SK-N-SH (cell line): ENCODE measurements at regions of chr2 and their contacts with region 1.

Region 1: GRCh38 chr2:237072067-237072931 is 13.4 kb upstream of the COPS8 start:
- DNase-seq: peak; percentile 67
- H3K4me3 ChIP-seq: no peak overlapping the region; a peak in 1 of 4 replicates
- H3K27ac ChIP-seq: no peak overlapping the region
- H3K4me1 ChIP-seq: no peaks in the 10 kb centered on the region; a peak in 1 of 4 replicates
- H3K27me3 ChIP-seq: no peaks in the 10 kb centered on the region
- CTCF ChIP-seq: peak; percentile 91
- EP300 ChIP-seq: no peak
- RAD21 ChIP-seq: peak; percentile 84

Region 2: GRCh38 chr2:237085248-237086221 is 13.2 kb after region 1 on chr2 and contains the start of gene COPS8:
- CTCF ChIA-PET with region 1: interaction called, 20 read pairs
- POLR2A ChIA-PET with region 1: no interaction called
- DNase-seq: peak; percentile 95
- H3K4me3 ChIP-seq: peak within 1 kb of the TSS; percentile 77 to 98
- H3K27ac ChIP-seq: peak within 1 kb of the TSS; percentile 85 to 94
- H3K4me1 ChIP-seq: peaks cover 0 to 18% of the 10 kb centered on the region in 2 experiments; a peak in 2 of 4 replicates
- H3K27me3 ChIP-seq: no peaks in the 10 kb centered on the region
- CTCF ChIP-seq: peak; percentile 42
- EP300 ChIP-seq: peak in 1 of 2 experiments; percentile 47; a peak in 2 of 4 replicates
- RAD21 ChIP-seq: no peak
- polyA plus RNA-seq, gene COPS8: 107 and 123 TPM in 2 replicates